CD4-positive, alpha-beta memory T cell (primary cell): ENCODE measurements at regions of chr12 and their contacts with region 1.

Region 1: DNA sequence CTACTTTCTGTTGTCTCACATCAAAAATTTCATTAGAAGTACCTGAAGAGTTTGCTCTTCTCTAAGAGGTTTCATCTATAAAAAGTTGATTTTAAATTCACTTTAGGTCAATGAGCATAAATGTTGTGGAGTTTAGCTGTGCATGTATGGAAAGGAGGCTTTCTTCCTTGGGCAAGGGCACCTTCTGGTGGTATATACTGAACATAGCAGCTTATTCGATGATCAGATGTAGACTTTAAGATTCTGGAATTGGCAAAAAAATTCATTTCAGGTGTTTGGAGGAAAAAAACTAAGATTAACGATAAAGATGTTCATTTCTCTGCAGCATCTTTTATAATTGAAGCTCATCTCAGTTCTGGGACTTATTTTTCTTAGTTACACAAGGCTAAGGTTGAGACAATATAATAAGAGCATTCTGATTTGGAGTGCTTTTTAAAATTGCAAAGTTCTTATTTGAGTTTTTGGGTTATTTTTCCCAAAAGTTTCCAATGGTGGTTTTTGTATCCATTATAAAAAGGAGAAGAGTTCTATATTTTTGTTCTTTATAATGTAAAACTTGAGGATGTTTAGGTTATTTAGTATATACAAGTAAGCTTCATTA is 46.8 kb downstream of the TMEM117 start:
- DNase-seq: peak in 4 of 5 donors; percentile 53 to 60 (median 56)
- H3K4me3 ChIP-seq: no peak overlapping the region
- H3K4me3 Mint-ChIP-seq: no peak overlapping the region
- H3K27ac ChIP-seq: no peak overlapping the region
- H3K27ac Mint-ChIP-seq: no peak overlapping the region
- H3K4me1 ChIP-seq: no peaks in the 10 kb centered on the region
- H3K4me1 Mint-ChIP-seq: peaks cover 0 to 4% (median 0%) of the 10 kb centered on the region in 4 donors
- H3K27me3 ChIP-seq: no peaks in the 10 kb centered on the region
- H3K27me3 Mint-ChIP-seq: no peaks in the 10 kb centered on the region

Region 2: GRCh38 chr12:43444940-43445564 is 437.6 kb before region 1 on chr12:
- CTCF ChIA-PET with region 1: interaction called, 40 read pairs
- POLR2A ChIA-PET with region 1: no interaction called
- intact Hi-C with region 1: no loop called
- DNase-seq: peak in 4 of 5 donors; percentile 20 to 44 (median 28)
- H3K4me3 ChIP-seq: no peak overlapping the region
- H3K4me3 Mint-ChIP-seq: no peak overlapping the region
- H3K27ac ChIP-seq: no peak overlapping the region
- H3K27ac Mint-ChIP-seq: no peak overlapping the region
- H3K4me1 ChIP-seq: no peaks in the 10 kb centered on the region
- H3K4me1 Mint-ChIP-seq: no peaks in the 10 kb centered on the region
- H3K27me3 ChIP-seq: no peaks in the 10 kb centered on the region
- H3K27me3 Mint-ChIP-seq: peaks cover 0 to 4% of the 10 kb centered on the region in 2 donors

Region 3: DNA sequence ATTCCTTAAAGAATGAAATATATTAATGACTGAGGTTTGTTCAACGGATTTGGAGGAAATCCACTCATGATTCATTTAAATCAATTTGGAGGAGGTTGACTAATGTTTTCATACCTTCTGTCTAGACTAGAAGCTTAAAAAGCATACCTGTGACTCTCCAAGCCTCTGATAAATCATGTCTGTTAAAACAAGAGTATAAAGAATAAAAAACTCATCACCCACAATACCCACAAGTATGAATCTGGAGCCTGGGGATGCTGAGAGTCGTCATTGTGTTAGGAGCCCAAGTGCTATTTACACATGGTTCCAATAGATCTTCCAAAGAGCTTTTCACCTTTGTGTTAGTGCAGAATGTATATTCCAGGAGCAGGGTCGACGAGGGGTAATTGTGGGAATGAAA is 243.9 kb before region 1 on chr12:
- CTCF ChIA-PET with region 1: no interaction called
- POLR2A ChIA-PET with region 1: no interaction called
- intact Hi-C with region 1: no loop called
- DNase-seq: no peak
- H3K4me3 ChIP-seq: no peak overlapping the region
- H3K4me3 Mint-ChIP-seq: no peak overlapping the region
- H3K27ac ChIP-seq: no peak overlapping the region
- H3K27ac Mint-ChIP-seq: no peak overlapping the region
- H3K4me1 ChIP-seq: no peaks in the 10 kb centered on the region
- H3K4me1 Mint-ChIP-seq: no peaks in the 10 kb centered on the region
- H3K27me3 ChIP-seq: peaks cover 2% of the 10 kb centered on the region
- H3K27me3 Mint-ChIP-seq: peaks cover 13% of the 10 kb centered on the region in 2 donors

Region 4: DNA sequence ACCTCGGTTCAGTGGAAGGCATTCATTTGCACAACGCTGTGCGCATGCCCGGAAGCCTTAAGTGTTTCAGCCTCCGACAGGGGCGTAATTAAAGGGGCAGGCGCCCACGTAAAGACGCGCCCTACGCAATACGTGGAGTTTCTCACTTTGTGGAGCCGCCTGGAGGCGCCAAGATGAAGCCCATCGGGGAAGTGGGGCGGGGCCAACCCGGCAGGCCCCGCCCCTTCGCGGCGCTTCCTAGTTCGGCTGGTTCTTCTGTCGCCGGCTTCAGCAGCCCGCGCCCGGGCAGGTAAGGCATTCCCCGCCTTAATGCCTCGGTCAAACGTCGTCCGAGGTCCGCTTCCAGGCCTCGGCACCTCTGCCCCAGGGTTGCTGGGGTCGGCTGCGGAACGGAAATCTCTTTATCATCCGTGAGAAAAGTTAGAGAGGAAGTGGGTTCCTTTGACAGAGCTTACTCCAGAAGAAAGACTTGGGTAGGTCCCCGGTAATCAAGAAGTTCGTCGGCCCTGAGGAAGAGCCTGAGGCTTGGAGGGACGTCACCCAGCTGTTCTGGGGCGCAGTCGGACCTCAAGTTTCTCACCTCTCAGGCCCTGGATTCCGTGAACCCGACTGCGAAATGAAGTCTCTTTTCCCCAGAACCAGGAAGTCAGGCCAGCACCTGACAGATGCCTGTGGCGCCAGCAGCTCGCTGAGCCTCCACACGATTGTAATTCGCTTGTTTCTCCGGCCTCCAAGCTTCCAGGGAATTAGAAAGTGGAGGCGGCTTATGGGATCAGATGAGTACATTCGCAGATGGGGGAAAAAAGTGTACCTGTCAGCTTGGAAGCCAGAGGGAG is 123.7 kb before region 1 on chr12 and contains the starts of genes IRAK4 and PUS7L:
- CTCF ChIA-PET with region 1: interaction called, 22 read pairs
- POLR2A ChIA-PET with region 1: interaction called, 4 read pairs
- intact Hi-C with region 1: loop called (anchors 1 kb)
- DNase-seq: peak; percentile 90 to 96 (median 93)
- H3K4me3 ChIP-seq: peak within 1 kb of the TSS; percentile 67 to 91
- H3K4me3 Mint-ChIP-seq: peak within 1 kb of the TSS; percentile 98 to 99 (median 98)
- H3K27ac ChIP-seq: peak within 1 kb of the TSS; percentile 93
- H3K27ac Mint-ChIP-seq: peak within 1 kb of the TSS; percentile 99
- H3K4me1 ChIP-seq: peaks cover 61% of the 10 kb centered on the region
- H3K4me1 Mint-ChIP-seq: peaks cover 45 to 84% (median 69%) of the 10 kb centered on the region in 4 donors
- H3K27me3 ChIP-seq: no peaks in the 10 kb centered on the region
- H3K27me3 Mint-ChIP-seq: no peaks in the 10 kb centered on the region
- total RNA-seq, gene IRAK4: 64.0 to 73.1 TPM
- total RNA-seq, gene PUS7L: 25.5 to 25.6 TPM

Region 5: DNA sequence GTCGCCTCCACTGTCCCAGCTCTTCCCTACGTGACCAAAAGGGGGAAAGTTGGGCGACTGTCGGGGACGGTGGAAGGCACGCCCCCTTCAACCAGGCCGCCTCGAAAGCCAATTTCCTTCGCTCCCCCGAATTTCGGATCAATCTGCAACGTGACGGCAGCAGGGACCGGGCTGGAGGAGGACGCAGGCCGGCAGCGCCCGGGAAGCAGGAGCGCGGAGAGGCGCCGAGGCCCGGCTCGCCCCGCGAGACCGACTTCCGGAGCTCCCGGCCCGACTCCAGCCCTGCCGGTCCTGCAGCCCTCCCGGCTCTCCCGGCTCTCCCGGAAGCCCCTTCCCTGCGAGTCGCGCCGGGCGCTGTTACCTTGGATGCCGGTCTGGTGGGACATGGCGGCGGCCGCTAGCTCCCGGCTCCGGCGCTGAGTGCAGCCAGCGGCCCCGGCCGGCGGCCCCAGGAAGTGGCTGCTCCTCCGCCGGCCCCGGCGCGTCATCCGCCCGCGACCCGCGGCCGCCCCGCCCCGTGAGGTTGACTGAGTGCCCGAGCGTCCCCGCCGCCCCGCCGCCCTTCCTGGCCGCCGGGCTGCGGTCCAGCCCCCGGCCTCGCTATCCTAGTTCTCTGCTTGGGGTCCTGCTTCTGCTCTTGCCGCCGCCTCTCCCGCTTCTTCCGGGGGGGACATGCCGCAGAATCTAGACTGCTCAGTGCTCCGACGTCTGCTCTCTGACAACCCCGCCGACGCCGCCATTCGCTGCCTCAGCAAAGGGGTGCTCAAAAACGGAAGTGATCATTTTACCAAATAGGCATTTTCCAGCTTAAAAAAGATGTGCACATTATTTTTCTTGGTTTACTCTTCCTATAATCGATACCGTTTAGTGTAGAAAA is 76.6 kb before region 1 on chr12 and contains the start of gene TWF1:
- CTCF ChIA-PET with region 1: interaction called, 4 read pairs
- POLR2A ChIA-PET with region 1: interaction called, 3 read pairs
- intact Hi-C with region 1: loop called (anchors 1 kb)
- DNase-seq: peak; percentile 85 to 92 (median 88)
- H3K4me3 ChIP-seq: peak within 1 kb of the TSS; percentile 85 to 89
- H3K4me3 Mint-ChIP-seq: peak within 1 kb of the TSS; percentile 99 to 100 (median 100)
- H3K27ac ChIP-seq: peak within 1 kb of the TSS; percentile 86
- H3K27ac Mint-ChIP-seq: peak within 1 kb of the TSS; percentile 99 to 100 (median 100)
- H3K4me1 ChIP-seq: peaks cover 34% of the 10 kb centered on the region
- H3K4me1 Mint-ChIP-seq: peaks cover 17 to 50% (median 35%) of the 10 kb centered on the region in 4 donors
- H3K27me3 ChIP-seq: no peaks in the 10 kb centered on the region
- H3K27me3 Mint-ChIP-seq: no peaks in the 10 kb centered on the region
- total RNA-seq, gene TWF1: 31.0 to 32.4 TPM

Region 6: GRCh38 chr12:43945983-43946382 is 63.3 kb after region 1 on chr12:
- CTCF ChIA-PET with region 1: no interaction called
- POLR2A ChIA-PET with region 1: no interaction called
- intact Hi-C with region 1: no loop called
- DNase-seq: no peak
- H3K4me3 ChIP-seq: no peak overlapping the region
- H3K4me3 Mint-ChIP-seq: no peak overlapping the region
- H3K27ac ChIP-seq: no peak overlapping the region
- H3K27ac Mint-ChIP-seq: no peak overlapping the region
- H3K4me1 ChIP-seq: no peaks in the 10 kb centered on the region
- H3K4me1 Mint-ChIP-seq: no peaks in the 10 kb centered on the region
- H3K27me3 ChIP-seq: no peaks in the 10 kb centered on the region
- H3K27me3 Mint-ChIP-seq: no peaks in the 10 kb centered on the region